HepG2 (cell line): ENCODE measurements at regions of chr17 and their contacts with region 1.

Region 1: GRCh38 chr17:74203439-74204240 is at the start of gene RPL38:
- DNase-seq: peak; percentile 98
- ATAC-seq: peak; percentile 78
- H3K4me3 ChIP-seq: peak within 1 kb of the TSS; percentile 92 to 99 (median 97)
- H3K27ac ChIP-seq: peak within 1 kb of the TSS; percentile 78
- H3K4me1 ChIP-seq: peaks cover 28% of the 10 kb centered on the region
- H3K27me3 ChIP-seq: peaks cover 18 to 48% of the 10 kb centered on the region in 2 experiments
- CTCF ChIP-seq: peak; percentile 99
- EP300 ChIP-seq: peak in 1 of 2 experiments; percentile 59; a peak in 2 of 4 replicates
- POLR2A ChIP-seq: peak; percentile 98 to 99
- RAD21 ChIP-seq: peak; percentile 50
- total RNA-seq, gene RPL38: 2,370 and 2,621 TPM in 2 replicates

Region 2: GRCh38 chr17:73798111-73798748 is 405.4 kb before region 1 on chr17:
- CTCF ChIA-PET with region 1: no interaction called
- POLR2A ChIA-PET with region 1: no interaction called
- in situ Hi-C with region 1: no loop called
- intact Hi-C with region 1: loop called (anchors 10 kb)
- DNase-seq: peak; percentile 100
- ATAC-seq: peak; percentile 96
- H3K4me3 ChIP-seq: peak overlapping the region in 2 of 3 experiments; percentile 23 to 64; a peak in 2 of 6 replicates
- H3K27ac ChIP-seq: peak overlapping the region; percentile 97
- H3K4me1 ChIP-seq: peaks cover 96% of the 10 kb centered on the region
- H3K27me3 ChIP-seq: no peaks in the 10 kb centered on the region
- CTCF ChIP-seq: no peak
- EP300 ChIP-seq: peak; percentile 94 to 97
- POLR2A ChIP-seq: peak in 1 of 2 experiments; percentile 49; a peak in 1 of 4 replicates
- RAD21 ChIP-seq: peak; percentile 56; the same call in 1 of the 2 replicates

Region 3: DNA sequence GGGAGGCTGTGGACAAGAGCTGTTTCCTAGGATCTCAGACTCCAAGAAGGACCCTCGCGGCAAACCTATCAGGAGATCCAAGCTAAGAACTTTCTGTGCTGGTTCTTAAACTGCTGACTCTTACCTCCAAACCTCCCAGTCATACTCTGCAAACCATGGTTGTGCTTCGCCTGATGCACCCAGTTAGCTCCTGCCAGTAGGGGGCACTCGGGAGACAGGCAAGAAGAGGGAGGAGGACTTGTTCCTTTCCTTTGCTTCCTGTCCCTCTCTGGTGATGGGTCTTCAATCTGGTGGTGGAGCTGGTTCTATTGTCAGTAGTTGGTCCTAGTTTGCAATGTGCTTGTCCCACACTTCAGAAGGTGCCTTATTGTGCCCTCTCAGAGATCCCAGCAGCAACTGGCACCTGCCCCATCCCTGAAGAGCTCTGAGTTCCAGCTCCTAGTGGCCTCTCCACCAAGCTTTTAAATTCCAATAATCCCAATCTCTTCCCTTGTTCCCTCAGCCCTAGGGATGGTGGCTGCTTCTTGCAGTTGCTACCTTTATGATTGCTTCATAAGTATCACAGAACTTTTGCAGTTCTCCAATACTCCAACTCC is 113.7 kb before region 1 on chr17:
- CTCF ChIA-PET with region 1: interaction called, 16 read pairs
- POLR2A ChIA-PET with region 1: interaction called, 4 read pairs
- in situ Hi-C with region 1: no loop called
- intact Hi-C with region 1: loop called (anchors 1 kb)
- DNase-seq: peak; percentile 68
- ATAC-seq: peak; percentile 86
- H3K4me3 ChIP-seq: no peak overlapping the region
- H3K27ac ChIP-seq: no peak overlapping the region
- H3K4me1 ChIP-seq: no peaks in the 10 kb centered on the region
- H3K27me3 ChIP-seq: peaks cover 3 to 5% of the 10 kb centered on the region in 2 experiments; a peak in 2 of 5 replicates
- CTCF ChIP-seq: peak; percentile 85
- EP300 ChIP-seq: no peak
- POLR2A ChIP-seq: no peak
- RAD21 ChIP-seq: 0 out of 2 replicates have a peak, but pooled peaks have one; percentile 25

Region 4: GRCh38 chr17:74192950-74193781 is 10.5 kb before region 1 on chr17:
- CTCF ChIA-PET with region 1: no interaction called
- POLR2A ChIA-PET with region 1: interaction called, 44 read pairs
- in situ Hi-C with region 1: no loop called
- intact Hi-C with region 1: no loop called
- DNase-seq: peak; percentile 75
- ATAC-seq: peak; percentile 68
- H3K4me3 ChIP-seq: no peak overlapping the region; a peak in 1 of 6 replicates
- H3K27ac ChIP-seq: no peak overlapping the region
- H3K4me1 ChIP-seq: peaks cover 14% of the 10 kb centered on the region
- H3K27me3 ChIP-seq: peaks cover 7 to 40% of the 10 kb centered on the region in 2 experiments
- CTCF ChIP-seq: no peak
- EP300 ChIP-seq: peak in 1 of 2 experiments; percentile 58; a peak in 2 of 4 replicates
- POLR2A ChIP-seq: no peak
- RAD21 ChIP-seq: no peak